Activated naive CD4-positive, alpha-beta T cell treated with anti-CD3 and anti-CD28 coated beads, Interleukin-2, amount 10 ng/mL, durations not matched to agents 7 days and 5 days (primary cell): ENCODE measurements at regions of chr19 and their contacts with region 1.

Region 1: DNA sequence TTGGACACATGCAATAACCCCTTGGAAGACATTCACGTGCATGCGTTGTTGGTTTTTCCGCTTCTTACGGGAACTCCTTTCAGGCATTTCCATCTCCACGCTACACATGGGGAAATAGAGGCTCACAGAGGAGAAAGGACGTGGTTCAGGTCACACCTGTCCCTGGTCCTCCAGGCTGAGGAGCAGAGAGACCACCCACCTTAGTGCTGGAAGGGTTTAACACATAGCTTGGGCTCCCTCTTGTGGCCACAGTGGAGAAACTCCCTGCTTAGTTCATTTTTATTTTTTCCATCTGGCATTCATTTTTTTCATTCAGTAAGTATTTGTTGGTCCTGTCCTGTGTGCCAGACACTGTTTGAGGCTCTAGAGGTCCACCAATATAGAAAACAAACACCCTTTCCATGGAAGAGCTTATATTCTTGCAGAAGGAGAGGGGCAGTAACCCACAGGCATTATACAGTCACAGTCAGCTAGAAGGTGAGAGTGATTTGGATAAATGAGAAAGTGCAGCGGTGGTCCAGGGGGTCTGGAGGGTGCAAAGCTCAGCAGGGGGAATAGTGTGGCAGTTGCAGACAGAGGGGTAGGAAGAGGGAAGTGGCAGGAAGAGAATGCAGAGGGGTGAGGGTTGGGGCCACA is 24.2 kb upstream of the TTYH1 start:
- DNase-seq: peak; percentile 77
- H3K4me3 Mint-ChIP-seq: peak overlapping the region; percentile 48
- H3K27ac Mint-ChIP-seq: peak overlapping the region; percentile 79
- H3K4me1 Mint-ChIP-seq: peaks cover 44% of the 10 kb centered on the region
- H3K27me3 Mint-ChIP-seq: peaks cover 46% of the 10 kb centered on the region

Region 2: GRCh38 chr19:54316746-54317107 is 74.3 kb before region 1 on chr19:
- CTCF ChIA-PET with region 1: interaction called, 128 read pairs
- DNase-seq: no peak
- H3K4me3 Mint-ChIP-seq: no peak overlapping the region
- H3K27ac Mint-ChIP-seq: no peak overlapping the region
- H3K4me1 Mint-ChIP-seq: no peaks in the 10 kb centered on the region
- H3K27me3 Mint-ChIP-seq: peaks cover 74% of the 10 kb centered on the region

Region 3: GRCh38 chr19:54325194-54325621 is 65.9 kb before region 1 on chr19:
- CTCF ChIA-PET with region 1: interaction called, 128 read pairs
- DNase-seq: peak; percentile 62
- H3K4me3 Mint-ChIP-seq: no peak overlapping the region
- H3K27ac Mint-ChIP-seq: no peak overlapping the region
- H3K4me1 Mint-ChIP-seq: peaks cover 18% of the 10 kb centered on the region
- H3K27me3 Mint-ChIP-seq: peaks cover 43% of the 10 kb centered on the region

Region 4: GRCh38 chr19:54357381-54357780 is 33.7 kb before region 1 on chr19:
- CTCF ChIA-PET with region 1: interaction called, 49 read pairs
- DNase-seq: no peak
- H3K4me3 Mint-ChIP-seq: no peak overlapping the region
- H3K27ac Mint-ChIP-seq: no peak overlapping the region
- H3K4me1 Mint-ChIP-seq: peaks cover 25% of the 10 kb centered on the region
- H3K27me3 Mint-ChIP-seq: peaks cover 5% of the 10 kb centered on the region

Region 5: GRCh38 chr19:54379187-54379678 is 11.8 kb before region 1 on chr19:
- CTCF ChIA-PET with region 1: interaction called, 12 read pairs
- DNase-seq: no peak
- H3K4me3 Mint-ChIP-seq: no peak overlapping the region
- H3K27ac Mint-ChIP-seq: peak overlapping the region; percentile 2
- H3K4me1 Mint-ChIP-seq: peaks cover 68% of the 10 kb centered on the region
- H3K27me3 Mint-ChIP-seq: peaks cover 64% of the 10 kb centered on the region

Region 6: GRCh38 chr19:54439174-54439853 is 48.3 kb after region 1 on chr19:
- CTCF ChIA-PET with region 1: interaction called, 13 read pairs
- DNase-seq: peak; percentile 52
- H3K4me3 Mint-ChIP-seq: no peak overlapping the region
- H3K27ac Mint-ChIP-seq: no peak overlapping the region
- H3K4me1 Mint-ChIP-seq: peaks cover 13% of the 10 kb centered on the region
- H3K27me3 Mint-ChIP-seq: no peaks in the 10 kb centered on the region